Activated CD8-positive, alpha-beta T cell treated with anti-CD3 and anti-CD28 coated beads for 36 hours (primary cell): ENCODE measurements at regions of chr13 and their contacts with region 1.

Region 1: GRCh38 chr13:41465241-41465847 is 8.0 kb downstream of the RGCC start:
- DNase-seq: peak; percentile 97
- ATAC-seq: peak; percentile 81
- H3K4me3 Mint-ChIP-seq: peak overlapping the region; percentile 71
- H3K27ac Mint-ChIP-seq: peak overlapping the region; percentile 98
- H3K4me1 Mint-ChIP-seq: peaks cover 91% of the 10 kb centered on the region
- H3K27me3 Mint-ChIP-seq: no peaks in the 10 kb centered on the region
- CTCF ChIP-seq: no peak

Region 2: DNA sequence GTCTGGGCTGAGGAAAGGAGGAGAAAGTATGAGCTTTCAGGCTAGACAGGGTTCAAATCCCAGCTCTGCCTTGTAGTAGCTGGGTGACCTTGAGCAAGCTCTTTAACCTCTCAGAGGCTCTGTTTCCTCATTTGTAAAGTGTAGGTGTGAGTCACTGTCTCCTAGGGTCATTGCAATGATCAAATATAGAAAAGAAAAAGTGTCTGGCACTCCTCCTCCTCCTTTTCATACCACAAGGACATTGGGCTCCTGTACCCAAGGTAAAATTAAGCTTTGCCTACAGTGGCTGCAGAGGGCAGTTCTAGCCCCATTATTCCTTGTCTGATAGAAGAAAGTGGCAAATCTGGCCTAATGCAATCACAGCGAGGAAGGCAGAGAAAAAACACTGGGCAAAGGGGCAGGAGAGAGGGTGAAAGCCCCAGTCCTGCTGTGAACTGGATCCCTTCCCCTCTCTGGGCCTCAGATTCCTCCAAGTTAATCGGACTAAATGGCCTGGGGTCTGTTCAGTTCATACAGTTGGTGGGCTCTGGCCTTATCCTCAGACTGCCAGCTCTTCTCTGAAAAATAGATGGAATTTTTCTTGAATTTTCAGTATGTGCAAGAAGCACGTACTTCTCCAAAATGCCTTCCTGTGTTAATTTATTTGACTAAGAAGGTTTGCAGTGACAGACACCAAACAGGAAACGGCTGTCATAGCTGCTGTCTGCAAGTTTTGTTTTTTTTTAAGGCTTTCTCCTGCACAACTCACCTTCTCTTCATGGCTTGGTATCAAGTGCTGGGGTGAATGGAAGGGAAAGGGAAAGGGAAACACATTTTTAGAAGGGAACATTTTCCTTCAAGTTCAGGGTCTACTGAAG is 27.3 kb after region 1 on chr13:
- CTCF ChIA-PET with region 1: interaction called, 66 read pairs
- POLR2A ChIA-PET with region 1: interaction called, 24 read pairs
- intact Hi-C with region 1: loop called (anchors 1 kb)
- DNase-seq: peak; percentile 39
- ATAC-seq: peak; percentile 72
- H3K4me3 Mint-ChIP-seq: peak overlapping the region; percentile 59
- H3K27ac Mint-ChIP-seq: peak overlapping the region; percentile 97
- H3K4me1 Mint-ChIP-seq: peaks cover 83% of the 10 kb centered on the region
- H3K27me3 Mint-ChIP-seq: no peaks in the 10 kb centered on the region
- CTCF ChIP-seq: no peak

Region 3: GRCh38 chr13:41554626-41555386 is 89.5 kb after region 1 on chr13:
- CTCF ChIA-PET with region 1: interaction called, 20 read pairs
- POLR2A ChIA-PET with region 1: interaction called, 4 read pairs
- intact Hi-C with region 1: loop called (anchors 5 kb)
- DNase-seq: peak; percentile 75
- ATAC-seq: peak; percentile 98
- H3K4me3 Mint-ChIP-seq: no peak overlapping the region
- H3K27ac Mint-ChIP-seq: no peak overlapping the region
- H3K4me1 Mint-ChIP-seq: peaks cover 11% of the 10 kb centered on the region
- H3K27me3 Mint-ChIP-seq: no peaks in the 10 kb centered on the region
- CTCF ChIP-seq: no peak

Region 4: GRCh38 chr13:41652727-41653361 is 187.5 kb after region 1 on chr13:
- CTCF ChIA-PET with region 1: interaction called, 6 read pairs
- POLR2A ChIA-PET with region 1: no interaction called
- intact Hi-C with region 1: loop called (anchors 5 kb)
- DNase-seq: peak; percentile 55
- ATAC-seq: no peak
- H3K4me3 Mint-ChIP-seq: no peak overlapping the region
- H3K27ac Mint-ChIP-seq: no peak overlapping the region
- H3K4me1 Mint-ChIP-seq: peaks cover 15% of the 10 kb centered on the region
- H3K27me3 Mint-ChIP-seq: no peaks in the 10 kb centered on the region
- CTCF ChIP-seq: peak; percentile 60

Region 5: GRCh38 chr13:41955605-41956004 is 490.3 kb after region 1 on chr13:
- CTCF ChIA-PET with region 1: no interaction called
- POLR2A ChIA-PET with region 1: no interaction called
- intact Hi-C with region 1: no loop called
- DNase-seq: peak; percentile 24
- ATAC-seq: no peak
- H3K4me3 Mint-ChIP-seq: no peak overlapping the region
- H3K27ac Mint-ChIP-seq: no peak overlapping the region
- H3K4me1 Mint-ChIP-seq: peaks cover 54% of the 10 kb centered on the region
- H3K27me3 Mint-ChIP-seq: no peaks in the 10 kb centered on the region
- CTCF ChIP-seq: no peak